Ascending aorta (tissue), 2 donors: ENCODE measurements at regions of chr13 and their contacts with region 1.

Region 1: GRCh38 chr13:60396783-60397703 is at the start of gene TDRD3:
- DNase-seq: peak; percentile 40 to 89
- H3K4me3 ChIP-seq: peak within 1 kb of the TSS; percentile 86 to 89
- H3K27ac ChIP-seq: peak within 1 kb of the TSS; percentile 98 to 99
- H3K4me1 ChIP-seq: peaks cover 0 to 17% of the 10 kb centered on the region in 2 donors
- H3K27me3 ChIP-seq: no peaks in the 10 kb centered on the region
- CTCF ChIP-seq: peak; percentile 68 to 89 (median 87)
- total RNA-seq, gene TDRD3: 3.0 TPM

Region 2: DNA sequence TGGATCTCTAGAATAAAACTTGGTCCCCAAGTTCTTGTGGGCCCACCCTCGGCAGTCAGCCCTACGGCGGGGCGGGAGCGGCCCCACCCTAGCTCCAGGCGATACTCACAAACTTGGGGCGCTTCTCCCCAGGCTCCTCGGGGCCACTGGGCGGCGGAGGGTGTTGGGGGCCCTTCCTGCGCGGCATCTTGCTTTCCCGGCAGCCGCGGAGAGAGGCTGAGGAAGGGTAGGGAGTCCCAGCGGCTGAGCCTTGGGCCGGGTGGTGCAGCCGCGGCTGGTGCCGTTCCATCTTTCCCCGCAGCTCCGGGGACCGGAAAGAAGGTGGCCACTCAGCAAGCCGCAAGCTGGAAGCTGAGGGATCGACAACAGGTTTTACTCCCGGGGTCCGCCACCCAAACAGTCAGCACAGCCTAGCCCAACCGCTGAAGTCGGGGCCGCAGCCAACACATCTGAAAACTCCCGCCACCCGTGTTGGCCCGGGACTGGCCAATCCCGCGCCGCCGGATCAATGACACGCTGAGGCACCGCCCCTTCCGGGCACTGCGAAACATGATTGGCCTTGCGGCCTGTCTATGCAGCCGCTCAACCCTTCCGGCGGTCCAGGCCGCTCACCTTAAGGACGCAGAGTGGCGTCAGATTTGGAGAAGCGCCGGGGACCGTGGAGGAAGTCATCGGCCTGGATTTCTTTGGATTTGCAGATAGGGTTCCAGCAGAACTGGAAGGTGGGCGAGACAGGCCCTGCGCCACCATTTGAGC is 233.4 kb before region 1 on chr13 and contains the start of gene DIAPH3:
- intact Hi-C with region 1: loop called (anchors 2 kb)
- DNase-seq: peak; percentile 89 to 97
- H3K4me3 ChIP-seq: peak within 1 kb of the TSS; percentile 84 to 86
- H3K27ac ChIP-seq: peak within 1 kb of the TSS; percentile 82 to 96
- H3K4me1 ChIP-seq: peaks cover 0 to 15% of the 10 kb centered on the region in 2 donors
- H3K27me3 ChIP-seq: no peaks in the 10 kb centered on the region
- CTCF ChIP-seq: no peak
- total RNA-seq, gene DIAPH3: 0.32 TPM

Region 3: GRCh38 chr13:60431108-60431700 is 34.2 kb after region 1 on chr13:
- intact Hi-C with region 1: loop called (anchors 2 kb)
- DNase-seq: no peak
- H3K4me3 ChIP-seq: no peak overlapping the region
- H3K27ac ChIP-seq: no peak overlapping the region
- H3K4me1 ChIP-seq: no peaks in the 10 kb centered on the region
- H3K27me3 ChIP-seq: no peaks in the 10 kb centered on the region
- CTCF ChIP-seq: peak; percentile 68 to 91 (median 90)

Region 4: DNA sequence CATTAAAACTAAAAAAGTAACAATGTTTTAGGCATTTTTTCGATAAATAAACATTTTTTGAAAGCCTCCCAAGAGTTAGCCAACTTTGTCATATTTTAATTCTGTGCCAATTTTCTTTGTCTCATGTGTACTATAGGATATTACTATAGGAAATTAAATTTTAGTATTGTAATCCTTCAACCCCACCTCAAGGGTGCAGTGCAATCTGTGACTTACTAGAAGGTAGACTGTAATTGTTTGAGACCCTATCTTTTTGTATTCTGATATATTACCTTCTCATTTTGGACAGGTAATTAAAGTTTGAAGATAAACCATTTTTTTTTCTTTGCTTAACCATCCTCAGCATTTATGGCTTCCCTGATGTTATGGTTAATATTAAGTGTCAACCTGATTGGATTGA is 560.8 kb after region 1 on chr13:
- intact Hi-C with region 1: no loop called
- DNase-seq: no peak
- H3K4me3 ChIP-seq: no peak overlapping the region
- H3K27ac ChIP-seq: no peak overlapping the region
- H3K4me1 ChIP-seq: no peaks in the 10 kb centered on the region
- H3K27me3 ChIP-seq: no peaks in the 10 kb centered on the region
- CTCF ChIP-seq: no peak